CD4-positive, alpha-beta memory T cell (primary cell): ENCODE measurements at regions of chr20 and their contacts with region 1.

Region 1: GRCh38 chr20:41028348-41029148 is at the start of gene TOP1:
- DNase-seq: peak; percentile 97 to 100 (median 99)
- H3K4me3 ChIP-seq: peak within 1 kb of the TSS; percentile 25 to 83
- H3K4me3 Mint-ChIP-seq: peak within 1 kb of the TSS; percentile 89 to 98 (median 95)
- H3K27ac ChIP-seq: peak within 1 kb of the TSS; percentile 97
- H3K27ac Mint-ChIP-seq: peak within 1 kb of the TSS; percentile 96 to 99 (median 97)
- H3K4me1 ChIP-seq: peaks cover 48% of the 10 kb centered on the region
- H3K4me1 Mint-ChIP-seq: peaks cover 38 to 57% (median 44%) of the 10 kb centered on the region in 4 donors
- H3K27me3 ChIP-seq: no peaks in the 10 kb centered on the region
- H3K27me3 Mint-ChIP-seq: peaks cover 0 to 2% of the 10 kb centered on the region in 2 donors
- total RNA-seq, gene TOP1: 44.4 to 47.5 TPM

Region 2: DNA sequence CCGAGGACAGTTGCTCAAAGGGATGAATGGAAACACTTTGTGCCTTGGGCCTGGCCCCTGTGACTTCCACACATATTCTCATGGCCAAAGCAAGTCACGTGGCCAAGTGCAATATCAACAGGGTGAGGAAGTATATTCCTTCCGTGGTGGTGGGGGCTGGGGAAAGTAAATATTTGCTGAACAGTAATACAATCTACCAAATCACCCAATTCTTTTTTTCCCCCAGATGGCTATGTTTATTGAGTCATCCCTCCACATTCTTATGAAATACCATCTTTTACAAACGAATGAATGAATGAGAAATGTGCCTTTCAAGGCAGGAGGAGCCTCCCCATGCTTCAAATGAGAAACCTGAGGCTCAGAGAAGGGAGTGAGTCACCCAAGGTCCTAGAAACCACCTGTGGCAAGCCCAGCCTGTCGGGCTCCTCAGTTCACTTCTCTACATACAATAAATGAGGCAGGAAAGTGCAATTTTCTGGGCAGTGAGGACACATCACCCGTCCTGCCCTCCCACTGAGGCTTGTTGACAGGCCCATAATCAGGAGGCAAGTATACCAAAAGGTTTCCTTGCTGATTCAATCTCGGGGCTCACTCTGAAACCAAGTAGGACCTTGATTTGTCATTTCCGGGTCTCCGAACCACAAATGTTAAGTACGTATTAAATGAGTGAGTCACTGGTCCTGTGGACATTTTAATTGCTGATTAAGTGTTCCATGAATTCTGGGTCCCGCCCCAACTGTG is 25.2 kb before region 1 on chr20:
- CTCF ChIA-PET with region 1: interaction called, 3 read pairs
- POLR2A ChIA-PET with region 1: no interaction called
- intact Hi-C with region 1: loop called (anchors 1 kb)
- DNase-seq: peak; percentile 76 to 91 (median 83)
- H3K4me3 ChIP-seq: peak overlapping the region; percentile 19 to 60
- H3K4me3 Mint-ChIP-seq: peak overlapping the region; percentile 78 to 90 (median 82)
- H3K27ac ChIP-seq: peak overlapping the region; percentile 72
- H3K27ac Mint-ChIP-seq: peak overlapping the region; percentile 95 to 99 (median 97)
- H3K4me1 ChIP-seq: peaks cover 13% of the 10 kb centered on the region
- H3K4me1 Mint-ChIP-seq: peaks cover 16 to 41% (median 22%) of the 10 kb centered on the region in 4 donors
- H3K27me3 ChIP-seq: no peaks in the 10 kb centered on the region
- H3K27me3 Mint-ChIP-seq: no peaks in the 10 kb centered on the region

Region 3: DNA sequence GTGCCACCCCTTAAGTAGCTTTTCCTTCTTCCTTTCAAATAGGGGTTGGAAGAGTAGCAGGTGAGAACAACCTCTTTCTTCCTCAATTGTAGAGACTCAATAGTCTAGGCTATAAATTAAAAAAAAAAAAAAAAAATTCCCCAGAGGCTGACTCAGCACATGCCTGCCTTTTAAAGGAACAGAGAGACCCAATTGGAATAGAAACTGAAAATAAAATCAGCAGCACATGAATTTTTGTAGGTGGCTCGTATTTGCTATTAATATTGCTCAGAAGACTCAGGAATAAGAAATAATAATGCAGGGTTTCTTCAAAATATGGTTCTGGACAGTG is 19.4 kb after region 1 on chr20:
- CTCF ChIA-PET with region 1: interaction called, 5 read pairs
- POLR2A ChIA-PET with region 1: interaction called, 34 read pairs
- intact Hi-C with region 1: loop called (anchors 1 kb)
- DNase-seq: peak in 4 of 5 donors; percentile 46 to 58 (median 54)
- H3K4me3 ChIP-seq: peak overlapping the region; percentile 18 to 39
- H3K4me3 Mint-ChIP-seq: peak overlapping the region; percentile 76 to 92 (median 84)
- H3K27ac ChIP-seq: peak overlapping the region; percentile 57
- H3K27ac Mint-ChIP-seq: peak overlapping the region; percentile 73 to 96 (median 91)
- H3K4me1 ChIP-seq: peaks cover 90% of the 10 kb centered on the region
- H3K4me1 Mint-ChIP-seq: peaks cover 69 to 97% (median 84%) of the 10 kb centered on the region in 4 donors
- H3K27me3 ChIP-seq: no peaks in the 10 kb centered on the region
- H3K27me3 Mint-ChIP-seq: no peaks in the 10 kb centered on the region

Region 4: GRCh38 chr20:41086402-41087338 is 58.1 kb after region 1 on chr20:
- CTCF ChIA-PET with region 1: interaction called, 4 read pairs
- POLR2A ChIA-PET with region 1: no interaction called
- intact Hi-C with region 1: loop called (anchors 2 kb)
- DNase-seq: peak in 1 of 5 donors; percentile 17
- H3K4me3 ChIP-seq: no peak overlapping the region
- H3K4me3 Mint-ChIP-seq: peak overlapping the region in 4 of 8 donors; percentile 2 to 37 (median 5)
- H3K27ac ChIP-seq: no peak overlapping the region
- H3K27ac Mint-ChIP-seq: peak overlapping the region; percentile 37 to 86 (median 69)
- H3K4me1 ChIP-seq: peaks cover 19% of the 10 kb centered on the region
- H3K4me1 Mint-ChIP-seq: peaks cover 16 to 37% (median 26%) of the 10 kb centered on the region in 4 donors
- H3K27me3 ChIP-seq: no peaks in the 10 kb centered on the region
- H3K27me3 Mint-ChIP-seq: no peaks in the 10 kb centered on the region

Region 5: DNA sequence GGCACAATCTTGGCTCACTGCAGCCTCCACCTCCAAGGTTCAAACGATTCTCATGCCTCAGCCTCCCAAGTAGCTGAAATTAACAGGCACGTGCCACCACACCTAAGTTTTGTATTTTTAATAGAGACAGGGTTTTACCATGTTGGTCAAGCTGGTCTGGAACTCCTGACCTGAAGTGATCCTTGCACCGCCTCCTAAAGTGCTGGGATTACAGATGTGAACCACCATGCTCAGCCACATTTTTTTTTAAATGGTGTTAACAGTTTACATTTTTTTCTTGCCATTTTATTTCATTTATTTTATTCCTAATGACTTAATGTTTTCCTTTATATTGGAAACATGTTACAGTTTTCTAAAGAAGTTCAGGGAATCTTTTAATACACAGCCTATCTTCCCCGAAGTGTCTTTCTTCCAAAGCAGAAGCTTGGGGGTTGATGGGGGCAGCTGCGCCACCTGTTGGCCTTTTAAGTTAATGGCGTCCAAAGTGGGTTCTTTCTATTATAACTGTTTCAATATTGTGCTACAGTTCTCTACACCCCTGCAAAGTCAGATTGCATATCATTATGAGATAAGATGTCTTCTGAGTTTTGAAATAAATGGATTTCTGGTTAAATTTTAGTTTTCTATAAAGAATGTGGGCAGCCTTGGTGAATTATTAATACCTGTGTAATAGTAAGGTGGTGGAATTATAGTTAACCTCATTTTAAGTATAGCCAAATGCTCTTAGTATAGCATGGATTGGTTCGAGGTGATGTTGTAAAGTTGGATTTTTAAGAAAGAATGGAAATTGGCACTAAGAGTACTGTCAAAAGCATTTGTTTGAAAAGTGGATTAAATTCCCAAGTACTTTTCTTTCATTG is 66.8 kb after region 1 on chr20:
- CTCF ChIA-PET with region 1: interaction called, 4 read pairs
- POLR2A ChIA-PET with region 1: no interaction called
- intact Hi-C with region 1: loop called (anchors 2 kb)
- DNase-seq: peak in 4 of 5 donors; percentile 51 to 61 (median 54)
- H3K4me3 ChIP-seq: no peak overlapping the region
- H3K4me3 Mint-ChIP-seq: no peak overlapping the region
- H3K27ac ChIP-seq: no peak overlapping the region
- H3K27ac Mint-ChIP-seq: peak overlapping the region in 2 of 7 donors; percentile 46 to 72
- H3K4me1 ChIP-seq: no peaks in the 10 kb centered on the region
- H3K4me1 Mint-ChIP-seq: peaks cover 0 to 6% (median 0%) of the 10 kb centered on the region in 4 donors
- H3K27me3 ChIP-seq: no peaks in the 10 kb centered on the region
- H3K27me3 Mint-ChIP-seq: no peaks in the 10 kb centered on the region

Region 6: DNA sequence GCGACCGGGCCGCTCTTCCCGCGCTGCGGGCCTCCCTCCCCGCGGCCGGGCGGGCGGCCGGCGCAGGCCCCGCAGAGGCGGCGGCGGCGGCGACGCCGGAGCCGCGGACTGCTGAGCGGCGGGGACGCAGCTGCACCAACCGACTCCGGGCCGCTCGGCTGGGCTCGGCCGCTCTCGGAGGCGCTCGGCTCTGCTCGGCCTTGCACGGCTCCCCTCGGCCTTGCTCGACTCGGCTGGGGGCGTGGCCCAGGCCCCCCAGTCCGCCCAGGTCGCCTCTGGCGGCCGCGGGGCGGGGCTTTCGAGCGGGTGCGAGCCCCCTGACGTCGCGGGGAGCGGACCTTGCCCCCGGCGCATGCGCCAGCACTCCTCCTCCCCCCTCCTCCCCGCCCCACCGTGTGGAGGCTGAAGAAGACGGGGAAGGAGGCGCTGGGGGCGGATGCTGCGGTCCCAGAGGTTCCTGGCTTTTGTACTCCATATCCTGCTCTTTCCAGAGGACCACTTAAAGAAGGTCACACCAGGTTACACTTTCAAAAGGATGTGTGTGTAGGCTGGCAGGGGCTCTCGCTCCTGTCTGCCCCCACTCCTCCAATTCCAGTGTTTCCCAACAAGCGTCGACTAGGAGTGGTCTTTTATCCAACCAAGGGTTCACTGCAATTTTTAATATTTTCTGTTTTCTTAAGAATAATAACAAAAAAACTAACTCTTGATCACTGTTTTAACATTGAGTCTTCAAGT is 289.2 kb after region 1 on chr20 and contains the start of gene ZHX3:
- CTCF ChIA-PET with region 1: no interaction called
- POLR2A ChIA-PET with region 1: interaction called, 3 read pairs
- intact Hi-C with region 1: loop called (anchors 1 kb)
- DNase-seq: peak; percentile 91 to 97 (median 95)
- H3K4me3 ChIP-seq: peak within 1 kb of the TSS; percentile 21 to 74
- H3K4me3 Mint-ChIP-seq: peak within 1 kb of the TSS; percentile 85 to 90 (median 87)
- H3K27ac ChIP-seq: peak within 1 kb of the TSS; percentile 48
- H3K27ac Mint-ChIP-seq: peak within 1 kb of the TSS; percentile 79 to 90 (median 84)
- H3K4me1 ChIP-seq: peaks cover 16% of the 10 kb centered on the region
- H3K4me1 Mint-ChIP-seq: peaks cover 7 to 27% (median 18%) of the 10 kb centered on the region in 4 donors
- H3K27me3 ChIP-seq: no peaks in the 10 kb centered on the region
- H3K27me3 Mint-ChIP-seq: no peaks in the 10 kb centered on the region
- total RNA-seq, gene ZHX3: 5.2 to 6.3 TPM